Mucosa of descending colon (tissue), 3 donors: ENCODE measurements at regions of chr14 and their contacts with region 1.

Region 1: GRCh38 chr14:70027785-70028428 is 148.7 kb downstream of the SMOC1 start:
- DNase-seq: peak in 2 of 3 donors; percentile 79 to 80
- ATAC-seq: peak; percentile 77
- H3K4me3 ChIP-seq: no peak overlapping the region
- H3K4me1 ChIP-seq: no peaks in the 10 kb centered on the region
- CTCF ChIP-seq: peak; percentile 84

Region 2: DNA sequence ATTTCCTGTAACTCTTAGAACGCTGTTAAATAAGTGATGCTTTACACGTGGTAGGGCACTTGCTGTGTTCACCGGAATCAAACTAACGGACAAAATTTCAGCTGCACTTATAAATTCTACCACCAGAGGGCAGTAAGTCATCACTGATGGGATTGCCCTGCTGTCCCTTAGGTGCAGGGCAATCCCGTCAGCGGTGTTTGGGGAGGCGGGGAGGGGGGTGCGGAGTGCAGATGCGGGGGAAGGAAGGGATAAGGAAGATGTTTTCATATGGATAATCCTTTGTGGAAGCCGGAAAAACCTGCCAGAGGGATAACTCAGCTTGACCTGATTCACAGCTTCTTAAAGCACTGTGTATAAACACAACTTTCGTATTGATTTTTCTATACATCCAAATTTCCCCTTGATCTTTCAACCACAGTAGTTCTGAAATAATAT is 209.1 kb before region 1 on chr14:
- intact Hi-C with region 1: loop called (anchors 5 to 10 kb)
- DNase-seq: peak in 2 of 3 donors; percentile 39 to 79
- ATAC-seq: peak; percentile 82
- H3K4me3 ChIP-seq: no peak overlapping the region
- H3K4me1 ChIP-seq: peaks cover 3% of the 10 kb centered on the region
- CTCF ChIP-seq: peak; percentile 48

Region 3: GRCh38 chr14:69972755-69973154 is 55.2 kb before region 1 on chr14:
- intact Hi-C with region 1: no loop called
- DNase-seq: no peak
- ATAC-seq: no peak
- H3K4me3 ChIP-seq: no peak overlapping the region
- H3K4me1 ChIP-seq: no peaks in the 10 kb centered on the region
- CTCF ChIP-seq: no peak

Region 4: GRCh38 chr14:70527501-70528105 is 499.7 kb after region 1 on chr14:
- intact Hi-C with region 1: no loop called
- DNase-seq: no peak
- ATAC-seq: no peak
- H3K4me3 ChIP-seq: no peak overlapping the region
- H3K4me1 ChIP-seq: no peaks in the 10 kb centered on the region
- CTCF ChIP-seq: no peak